CD14-positive monocyte (primary cell): ENCODE measurements at regions of chr10 and their contacts with region 1.

Region 1: DNA sequence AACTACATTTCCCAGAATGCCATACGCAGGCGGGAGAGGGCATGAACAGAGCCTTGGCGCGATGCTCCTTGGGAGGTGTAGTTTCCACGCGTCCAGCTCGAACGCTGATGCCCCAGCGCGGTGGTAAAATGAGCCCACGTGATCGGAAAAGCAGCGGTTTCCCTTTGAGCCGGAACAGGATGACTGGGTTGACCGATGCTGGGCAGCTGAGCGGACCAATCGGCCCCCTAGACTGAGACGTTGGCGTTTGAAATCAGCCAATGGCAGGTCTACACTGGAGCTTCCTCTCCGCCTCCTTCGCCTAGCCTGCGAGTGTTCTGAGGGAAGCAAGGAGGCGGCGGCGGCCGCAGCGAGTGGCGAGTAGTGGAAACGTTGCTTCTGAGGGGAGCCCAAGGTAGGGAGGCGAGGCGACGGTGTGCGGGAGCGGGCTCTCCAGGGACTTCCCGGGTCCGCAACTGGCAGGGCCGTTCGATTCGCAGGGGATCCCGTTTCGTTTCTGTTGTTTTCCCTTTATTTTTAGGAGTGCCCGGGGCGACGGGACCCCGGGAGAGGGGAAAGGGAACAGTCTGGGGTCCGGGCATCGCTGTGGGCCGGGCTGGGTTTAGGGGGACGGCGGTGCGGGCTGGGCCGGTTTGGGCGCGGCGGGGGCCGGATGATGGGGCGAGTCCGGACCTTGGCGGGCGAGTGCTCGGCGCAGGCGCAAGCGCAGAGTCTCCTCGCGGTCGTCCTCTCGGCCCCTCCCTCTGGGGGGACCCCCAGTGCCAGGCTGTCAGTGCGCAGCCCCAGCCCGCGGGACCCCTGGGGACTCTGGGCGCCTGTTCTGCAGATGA is at the start of gene BUB3:
- DNase-seq: peak; percentile 99 to 100 (median 99)
- H3K4me3 ChIP-seq: peak within 1 kb of the TSS; percentile 81 to 97 (median 90)
- H3K4me3 Mint-ChIP-seq: peak within 1 kb of the TSS; percentile 96 to 99
- H3K27ac ChIP-seq: peak within 1 kb of the TSS; percentile 46 to 86
- H3K27ac Mint-ChIP-seq: peak within 1 kb of the TSS; percentile 87 to 95 (median 93)
- H3K4me1 ChIP-seq: peaks cover 30 to 43% of the 10 kb centered on the region in 2 donors
- H3K4me1 Mint-ChIP-seq: peaks cover 53% of the 10 kb centered on the region
- H3K27me3 ChIP-seq: peaks cover 33 to 43% of the 10 kb centered on the region in 2 donors
- H3K27me3 Mint-ChIP-seq: peaks cover 40 to 43% (median 42%) of the 10 kb centered on the region in 3 donors
- CTCF ChIP-seq: no peak
- polyA plus RNA-seq, gene BUB3: 61.2 to 96.4 (median 80.4) TPM

Region 2: GRCh38 chr10:122374237-122374869 is 780.0 kb before region 1 on chr10 and contains the start of gene PLEKHA1:
- intact Hi-C with region 1: loop called in 1 of 2 experiments (anchors 5 kb)
- DNase-seq: peak; percentile 87 to 93 (median 91)
- H3K4me3 ChIP-seq: peak within 1 kb of the TSS; percentile 25 to 82 (median 65)
- H3K4me3 Mint-ChIP-seq: peak within 1 kb of the TSS; percentile 93 to 95
- H3K27ac ChIP-seq: no peak within 1 kb of the TSS
- H3K27ac Mint-ChIP-seq: peak within 1 kb of the TSS; percentile 43 to 84 (median 56)
- H3K4me1 ChIP-seq: peaks cover 13 to 20% of the 10 kb centered on the region in 2 donors
- H3K4me1 Mint-ChIP-seq: peaks cover 17% of the 10 kb centered on the region
- H3K27me3 ChIP-seq: peaks cover 41 to 70% of the 10 kb centered on the region in 2 donors
- H3K27me3 Mint-ChIP-seq: peaks cover 42 to 64% (median 56%) of the 10 kb centered on the region in 3 donors
- CTCF ChIP-seq: no peak
- polyA plus RNA-seq, gene PLEKHA1: 5.5 to 14.9 (median 12.3) TPM

Region 3: GRCh38 chr10:122911889-122912484 is 242.3 kb before region 1 on chr10:
- intact Hi-C with region 1: no loop called
- DNase-seq: no peak
- H3K4me3 ChIP-seq: no peak overlapping the region
- H3K4me3 Mint-ChIP-seq: no peak overlapping the region
- H3K27ac ChIP-seq: no peak overlapping the region
- H3K27ac Mint-ChIP-seq: no peak overlapping the region
- H3K4me1 ChIP-seq: no peaks in the 10 kb centered on the region
- H3K4me1 Mint-ChIP-seq: no peaks in the 10 kb centered on the region
- H3K27me3 ChIP-seq: no peaks in the 10 kb centered on the region
- H3K27me3 Mint-ChIP-seq: peaks cover 0 to 8% (median 3%) of the 10 kb centered on the region in 3 donors
- CTCF ChIP-seq: no peak

Region 4: GRCh38 chr10:122953827-122954730 is 200.2 kb before region 1 on chr10 and contains the start of gene C10orf88:
- intact Hi-C with region 1: loop called in 1 of 2 experiments (anchors 5 kb)
- DNase-seq: peak; percentile 99
- H3K4me3 ChIP-seq: peak within 1 kb of the TSS; percentile 52 to 79 (median 69)
- H3K4me3 Mint-ChIP-seq: peak within 1 kb of the TSS; percentile 81 to 88
- H3K27ac ChIP-seq: peak within 1 kb of the TSS; percentile 46 to 75
- H3K27ac Mint-ChIP-seq: peak within 1 kb of the TSS; percentile 46 to 83 (median 64)
- H3K4me1 ChIP-seq: peaks cover 12 to 15% of the 10 kb centered on the region in 2 donors
- H3K4me1 Mint-ChIP-seq: peaks cover 18% of the 10 kb centered on the region
- H3K27me3 ChIP-seq: peaks cover 2 to 16% of the 10 kb centered on the region in 2 donors
- H3K27me3 Mint-ChIP-seq: peaks cover 9 to 17% (median 15%) of the 10 kb centered on the region in 3 donors
- CTCF ChIP-seq: no peak
- polyA plus RNA-seq, gene C10orf88: 2.2 to 2.9 (median 2.7) TPM

Region 5: DNA sequence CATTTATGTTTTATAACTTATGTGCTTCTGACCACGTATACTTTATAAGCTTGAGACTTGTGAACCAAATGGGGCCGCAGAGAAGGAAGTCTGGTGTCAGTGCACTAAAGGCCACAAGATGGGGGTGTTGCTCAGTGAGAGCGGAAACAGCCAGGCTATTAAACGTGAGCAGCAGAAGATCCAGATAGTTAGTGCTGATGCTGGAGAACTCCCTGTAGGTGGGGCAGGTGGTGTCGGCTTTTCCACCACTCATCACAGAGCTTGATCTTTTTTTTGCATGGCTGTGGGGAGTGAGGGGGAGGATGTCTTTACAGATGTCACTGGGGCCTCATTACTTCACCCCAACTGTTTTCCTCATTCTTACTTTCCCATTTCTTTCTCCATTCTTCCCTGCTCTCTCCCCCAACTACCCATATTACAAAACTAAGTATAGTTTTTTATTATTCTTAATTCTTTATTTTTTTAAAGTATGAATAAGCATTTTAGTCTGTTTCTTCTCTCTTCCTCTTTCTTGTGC is 110.8 kb before region 1 on chr10:
- intact Hi-C with region 1: no loop called
- DNase-seq: peak; percentile 6 to 22 (median 11)
- H3K4me3 ChIP-seq: no peak overlapping the region
- H3K4me3 Mint-ChIP-seq: no peak overlapping the region
- H3K27ac ChIP-seq: no peak overlapping the region
- H3K27ac Mint-ChIP-seq: peak overlapping the region in 2 of 7 donors; percentile 19 to 82
- H3K4me1 ChIP-seq: peaks cover 11% of the 10 kb centered on the region in 2 donors
- H3K4me1 Mint-ChIP-seq: peaks cover 12% of the 10 kb centered on the region
- H3K27me3 ChIP-seq: no peaks in the 10 kb centered on the region
- H3K27me3 Mint-ChIP-seq: no peaks in the 10 kb centered on the region
- CTCF ChIP-seq: peak; percentile 69

Region 6: GRCh38 chr10:123081896-123082295 is 72.4 kb before region 1 on chr10:
- intact Hi-C with region 1: no loop called
- DNase-seq: no peak
- H3K4me3 ChIP-seq: no peak overlapping the region
- H3K4me3 Mint-ChIP-seq: no peak overlapping the region
- H3K27ac ChIP-seq: no peak overlapping the region
- H3K27ac Mint-ChIP-seq: no peak overlapping the region
- H3K4me1 ChIP-seq: no peaks in the 10 kb centered on the region
- H3K4me1 Mint-ChIP-seq: no peaks in the 10 kb centered on the region
- H3K27me3 ChIP-seq: no peaks in the 10 kb centered on the region
- H3K27me3 Mint-ChIP-seq: peaks cover 0 to 4% (median 0%) of the 10 kb centered on the region in 3 donors
- CTCF ChIP-seq: no peak

Region 7: GRCh38 chr10:123241391-123242141 is 87.3 kb after region 1 on chr10:
- intact Hi-C with region 1: no loop called
- DNase-seq: no peak
- H3K4me3 ChIP-seq: no peak overlapping the region
- H3K4me3 Mint-ChIP-seq: no peak overlapping the region
- H3K27ac ChIP-seq: no peak overlapping the region
- H3K27ac Mint-ChIP-seq: peak overlapping the region in 1 of 7 donors; percentile 27
- H3K4me1 ChIP-seq: peaks cover 0 to 6% of the 10 kb centered on the region in 2 donors
- H3K4me1 Mint-ChIP-seq: peaks cover 8% of the 10 kb centered on the region
- H3K27me3 ChIP-seq: no peaks in the 10 kb centered on the region
- H3K27me3 Mint-ChIP-seq: no peaks in the 10 kb centered on the region
- CTCF ChIP-seq: no peak

Region 8: GRCh38 chr10:124461438-124462347 is 1307.4 kb after region 1 on chr10 and contains the start of gene LHPP:
- intact Hi-C with region 1: loop called in 1 of 2 experiments (anchors 10 kb)
- DNase-seq: peak; percentile 74 to 81 (median 81)
- H3K4me3 ChIP-seq: peak within 1 kb of the TSS; percentile 51 to 87 (median 86)
- H3K4me3 Mint-ChIP-seq: peak within 1 kb of the TSS; percentile 86 to 97
- H3K27ac ChIP-seq: peak within 1 kb of the TSS; percentile 46 to 84
- H3K27ac Mint-ChIP-seq: peak within 1 kb of the TSS; percentile 83 to 98 (median 93)
- H3K4me1 ChIP-seq: peaks cover 17 to 23% of the 10 kb centered on the region in 2 donors
- H3K4me1 Mint-ChIP-seq: peaks cover 29% of the 10 kb centered on the region
- H3K27me3 ChIP-seq: peaks cover 0 to 10% of the 10 kb centered on the region in 2 donors
- H3K27me3 Mint-ChIP-seq: peaks cover 7 to 23% (median 18%) of the 10 kb centered on the region in 3 donors
- CTCF ChIP-seq: peak; percentile 70
- polyA plus RNA-seq, gene LHPP: 15.2 to 20.6 (median 19.5) TPM

Region 9: GRCh38 chr10:124802313-124802675 is 1648.0 kb after region 1 on chr10:
- intact Hi-C with region 1: loop called (anchors 10 kb)
- DNase-seq: peak; percentile 72 to 87 (median 74)
- H3K4me3 ChIP-seq: peak overlapping the region; percentile 83 to 95 (median 85)
- H3K4me3 Mint-ChIP-seq: peak overlapping the region; percentile 93 to 95
- H3K27ac ChIP-seq: peak overlapping the region; percentile 96 to 99
- H3K27ac Mint-ChIP-seq: peak overlapping the region; percentile 93 to 98 (median 96)
- H3K4me1 ChIP-seq: peaks cover 14 to 17% of the 10 kb centered on the region in 2 donors
- H3K4me1 Mint-ChIP-seq: peaks cover 9% of the 10 kb centered on the region
- H3K27me3 ChIP-seq: no peaks in the 10 kb centered on the region
- H3K27me3 Mint-ChIP-seq: peaks cover 0 to 12% (median 1%) of the 10 kb centered on the region in 3 donors
- CTCF ChIP-seq: no peak